HCT116 (cell line): ENCODE measurements at regions of chr4 and their contacts with region 1.

Region 1: DNA sequence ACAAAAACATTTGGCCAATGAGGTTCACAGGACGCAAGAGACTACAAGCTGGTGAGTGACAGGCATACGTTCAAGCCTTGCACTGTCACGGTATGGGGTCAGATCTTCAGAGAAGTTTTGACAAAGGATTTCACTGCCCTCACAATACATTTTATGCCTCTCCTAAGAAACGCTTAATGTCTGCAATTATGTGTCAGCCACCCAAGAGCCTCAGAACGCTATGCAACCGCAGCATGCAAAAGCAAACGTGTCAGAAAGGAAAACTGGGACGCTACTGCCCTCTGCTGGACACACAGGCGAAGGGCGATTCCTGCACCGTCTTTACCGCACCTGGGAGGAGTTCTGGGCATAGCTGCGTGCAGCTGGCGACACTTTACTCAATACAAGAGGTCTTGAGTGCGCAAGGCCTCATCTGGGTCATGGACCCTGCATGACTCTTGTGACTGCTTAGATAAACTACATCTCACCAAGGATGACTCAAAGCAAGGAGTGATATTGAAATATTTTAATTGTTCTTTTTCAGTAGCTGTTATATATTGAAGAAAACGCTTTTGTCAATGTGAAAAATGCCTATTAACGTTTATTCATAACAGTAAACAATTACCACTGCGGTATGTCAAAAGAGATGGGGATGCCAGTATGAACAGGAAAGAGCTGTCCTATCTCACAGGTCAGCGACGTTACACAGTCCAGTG is 147.6 kb upstream of the FRG1 start:
- DNase-seq: peak; percentile 54
- ATAC-seq: peak; percentile 97
- H3K4me3 ChIP-seq: no peak overlapping the region
- H3K27ac ChIP-seq: no peak overlapping the region
- H3K4me1 ChIP-seq: no peaks in the 10 kb centered on the region
- H3K27me3 ChIP-seq: peaks cover 14% of the 10 kb centered on the region; the same call in 1 of the 2 replicates
- CTCF ChIP-seq: peak; percentile 67 to 93 (median 90)
- POLR2A ChIP-seq: no peak
- RAD21 ChIP-seq: peak; percentile 93

Region 2: GRCh38 chr4:189436207-189436606 is 356.9 kb before region 1 on chr4:
- CTCF ChIA-PET with region 1: interaction called, 20 read pairs
- POLR2A ChIA-PET with region 1: no interaction called
- RAD21 ChIA-PET with region 1: no interaction called
- intact Hi-C with region 1: loop called (anchors 1 kb)
- DNase-seq: peak; percentile 4
- ATAC-seq: peak; percentile 63
- H3K4me3 ChIP-seq: no peak overlapping the region
- H3K27ac ChIP-seq: no peak overlapping the region
- H3K4me1 ChIP-seq: no peaks in the 10 kb centered on the region
- H3K27me3 ChIP-seq: no peaks in the 10 kb centered on the region
- CTCF ChIP-seq: peak; percentile 24 to 59 (median 47); a peak in 5 of 6 replicates
- POLR2A ChIP-seq: no peak
- RAD21 ChIP-seq: peak; percentile 40

Region 3: GRCh38 chr4:189897667-189898066 is 104.6 kb after region 1 on chr4:
- CTCF ChIA-PET with region 1: no interaction called
- POLR2A ChIA-PET with region 1: no interaction called
- RAD21 ChIA-PET with region 1: no interaction called
- intact Hi-C with region 1: loop called (anchors 1 kb)
- DNase-seq: no peak
- ATAC-seq: no peak
- H3K4me3 ChIP-seq: no peak overlapping the region
- H3K27ac ChIP-seq: no peak overlapping the region
- H3K4me1 ChIP-seq: no peaks in the 10 kb centered on the region
- H3K27me3 ChIP-seq: no peaks in the 10 kb centered on the region
- CTCF ChIP-seq: no peak
- POLR2A ChIP-seq: no peak
- RAD21 ChIP-seq: no peak